CD4-positive, alpha-beta memory T cell (primary cell): ENCODE measurements at regions of chr14 and their contacts with region 1.

Region 1: DNA sequence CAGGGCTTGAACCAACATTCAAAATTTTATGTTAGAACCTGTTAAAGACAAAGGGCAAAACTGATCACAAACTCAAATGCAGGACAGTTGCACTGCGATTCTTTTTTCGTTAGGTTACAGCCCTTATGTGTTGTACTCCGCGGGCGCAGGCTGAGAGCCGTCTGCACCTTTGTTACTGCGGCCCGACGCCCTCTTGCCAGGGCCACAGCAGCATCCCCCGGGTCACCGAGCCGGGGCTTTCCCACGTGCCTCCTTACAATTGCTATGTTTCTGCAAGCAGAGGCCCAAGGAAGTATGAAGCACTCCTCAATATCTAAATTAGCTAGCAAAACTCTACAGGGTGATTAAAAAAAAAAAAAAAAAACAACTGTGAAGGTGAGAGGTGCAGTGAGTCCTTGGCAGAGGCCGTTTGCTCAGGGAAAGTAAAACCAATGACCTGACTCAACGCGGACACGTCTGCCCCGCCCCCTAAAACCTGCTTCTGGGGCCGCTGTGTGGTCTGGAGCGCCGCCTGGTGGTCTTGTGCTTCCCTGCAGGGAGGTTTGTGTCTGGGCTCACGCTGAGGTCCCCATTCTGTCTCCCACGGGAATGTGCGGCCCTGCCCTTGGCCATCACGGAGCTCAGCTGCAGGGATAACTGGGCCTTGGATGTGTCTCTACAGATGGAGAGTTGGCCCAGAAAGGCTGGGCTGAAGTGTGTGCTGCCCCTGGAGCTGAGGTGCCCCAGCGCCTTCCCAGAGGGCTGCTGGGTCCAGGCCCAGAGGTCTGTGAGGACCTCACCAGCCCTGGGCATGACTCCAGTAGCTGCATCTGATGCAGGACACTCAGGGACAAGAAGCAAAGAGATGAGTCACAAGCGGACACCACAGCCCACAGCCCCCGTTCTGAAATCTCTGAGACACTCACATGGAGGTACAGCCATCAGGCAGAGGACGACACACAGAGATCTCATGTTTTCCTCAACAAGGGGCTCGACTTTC is 418.5 kb downstream of the TMEM121 start:
- DNase-seq: peak; percentile 51 to 64 (median 55)
- H3K4me3 ChIP-seq: no peak overlapping the region
- H3K4me3 Mint-ChIP-seq: peak overlapping the region in 2 of 8 donors; percentile 32 to 43
- H3K27ac ChIP-seq: no peak overlapping the region
- H3K27ac Mint-ChIP-seq: peak overlapping the region in 1 of 7 donors; percentile 4
- H3K4me1 ChIP-seq: peaks cover 15% of the 10 kb centered on the region
- H3K4me1 Mint-ChIP-seq: peaks cover 4 to 16% (median 13%) of the 10 kb centered on the region in 4 donors
- H3K27me3 ChIP-seq: no peaks in the 10 kb centered on the region
- H3K27me3 Mint-ChIP-seq: peaks cover 0 to 10% of the 10 kb centered on the region in 2 donors

Region 2: DNA sequence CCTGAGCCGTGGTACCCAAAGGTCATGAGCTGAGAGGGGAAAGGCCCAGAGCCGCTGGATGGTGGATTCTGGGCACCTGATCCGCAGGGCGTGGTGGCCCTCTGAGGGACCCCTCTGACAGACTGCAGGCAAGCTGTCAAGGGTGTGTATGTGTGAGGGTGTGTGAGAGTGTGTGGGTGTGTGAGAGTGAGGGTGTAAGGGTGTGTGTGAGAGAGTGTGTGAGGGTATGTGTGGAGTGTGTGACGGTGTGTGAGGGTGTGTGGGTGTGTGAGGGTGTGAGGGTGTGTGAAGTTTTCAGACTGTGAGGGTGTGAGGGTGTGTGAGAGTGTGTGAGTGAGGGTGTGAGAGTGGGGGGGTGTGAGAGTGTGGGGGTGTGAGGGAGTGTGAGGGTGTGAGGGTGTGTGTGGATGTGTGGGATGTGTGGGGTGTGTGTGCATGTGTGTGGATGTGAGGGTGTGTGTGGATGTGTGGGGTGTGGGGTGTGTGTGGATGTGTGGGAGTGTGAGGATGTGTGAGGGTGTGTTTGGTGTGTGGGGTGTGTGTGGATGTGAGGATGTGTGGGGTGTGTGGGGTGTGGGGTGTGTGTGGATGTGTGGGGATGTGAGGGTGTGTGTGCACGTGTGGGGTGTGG is 261.9 kb before region 1 on chr14:
- CTCF ChIA-PET with region 1: interaction called, 3 read pairs
- POLR2A ChIA-PET with region 1: no interaction called
- intact Hi-C with region 1: loop called (anchors 5 kb)
- DNase-seq: no peak
- H3K4me3 ChIP-seq: no peak overlapping the region
- H3K4me3 Mint-ChIP-seq: no peak overlapping the region
- H3K27ac ChIP-seq: no peak overlapping the region
- H3K27ac Mint-ChIP-seq: no peak overlapping the region
- H3K4me1 ChIP-seq: no peaks in the 10 kb centered on the region
- H3K4me1 Mint-ChIP-seq: peaks cover 0 to 9% (median 0%) of the 10 kb centered on the region in 4 donors
- H3K27me3 ChIP-seq: no peaks in the 10 kb centered on the region
- H3K27me3 Mint-ChIP-seq: no peaks in the 10 kb centered on the region

Region 3: DNA sequence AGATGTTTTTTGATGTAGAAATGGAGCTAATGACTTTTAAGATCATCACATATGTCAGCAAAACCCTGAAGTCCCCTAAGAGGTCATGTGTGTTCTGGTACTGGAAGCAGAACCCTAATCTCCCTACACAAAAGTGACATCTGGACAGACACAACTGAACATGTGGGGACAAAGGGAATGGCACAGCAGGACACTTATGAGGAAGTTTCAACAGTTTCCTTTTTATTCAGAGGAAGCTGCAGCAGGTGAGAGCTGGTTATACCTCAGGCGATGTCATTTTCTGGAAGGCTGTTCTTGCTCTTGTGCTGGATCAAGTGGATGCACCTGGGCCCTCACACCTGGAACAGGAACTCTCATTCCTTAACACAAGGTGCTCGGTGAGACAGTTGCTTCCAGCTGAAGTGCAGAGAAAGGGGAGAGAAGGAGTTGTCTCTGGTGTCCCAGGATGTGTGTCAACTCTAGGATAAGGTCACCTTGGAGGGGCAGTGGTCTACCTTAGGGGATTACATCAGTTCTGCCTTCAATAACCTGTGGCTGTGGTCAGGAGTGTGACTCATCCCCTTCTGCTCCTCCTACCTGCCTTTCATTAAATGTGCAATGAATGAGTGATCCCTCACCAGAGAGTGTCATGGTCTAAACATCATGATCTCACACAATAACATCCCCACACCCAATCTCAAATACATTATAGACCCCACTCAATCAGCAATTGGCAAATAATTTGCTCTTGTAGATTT is 44.8 kb after region 1 on chr14:
- CTCF ChIA-PET with region 1: no interaction called
- POLR2A ChIA-PET with region 1: no interaction called
- intact Hi-C with region 1: no loop called
- DNase-seq: peak in 1 of 5 donors; percentile 57
- H3K4me3 ChIP-seq: no peak overlapping the region
- H3K4me3 Mint-ChIP-seq: no peak overlapping the region
- H3K27ac ChIP-seq: no peak overlapping the region
- H3K27ac Mint-ChIP-seq: peak overlapping the region in 6 of 7 donors; percentile 29 to 65 (median 42)
- H3K4me1 ChIP-seq: peaks cover 50% of the 10 kb centered on the region
- H3K4me1 Mint-ChIP-seq: peaks cover 32 to 56% (median 45%) of the 10 kb centered on the region in 4 donors
- H3K27me3 ChIP-seq: no peaks in the 10 kb centered on the region
- H3K27me3 Mint-ChIP-seq: no peaks in the 10 kb centered on the region